Ascending aorta (tissue), 2 donors: ENCODE measurements at regions of chr3 and their contacts with region 1.

Region 1: GRCh38 chr3:58491506-58492402 is at the start of gene KCTD6:
- DNase-seq: peak; percentile 65 to 96
- H3K4me3 ChIP-seq: peak within 1 kb of the TSS; percentile 96 to 98
- H3K27ac ChIP-seq: peak within 1 kb of the TSS; percentile 81 to 92
- H3K4me1 ChIP-seq: peaks cover 5 to 37% of the 10 kb centered on the region in 2 donors
- H3K27me3 ChIP-seq: no peaks in the 10 kb centered on the region
- CTCF ChIP-seq: peak; percentile 58 to 86 (median 64)
- total RNA-seq, gene KCTD6: 6.6 TPM

Region 2: GRCh38 chr3:58332575-58333188 is 159.1 kb before region 1 on chr3 and contains the start of gene PXK:
- intact Hi-C with region 1: loop called (anchors 1 kb)
- DNase-seq: peak in 1 of 2 donors; percentile 89
- H3K4me3 ChIP-seq: peak within 1 kb of the TSS; percentile 88 to 93
- H3K27ac ChIP-seq: peak within 1 kb of the TSS; percentile 61 to 67
- H3K4me1 ChIP-seq: peaks cover 0 to 9% of the 10 kb centered on the region in 2 donors
- H3K27me3 ChIP-seq: no peaks in the 10 kb centered on the region
- CTCF ChIP-seq: peak in 2 of 3 experiments; percentile 9 to 43
- total RNA-seq, gene PXK: 14.8 TPM

Region 3: GRCh38 chr3:58433400-58434169 is 58.2 kb before region 1 on chr3 and contains the start of gene PDHB:
- intact Hi-C with region 1: loop called (anchors 1 kb)
- DNase-seq: peak; percentile 70 to 96
- H3K4me3 ChIP-seq: peak within 1 kb of the TSS; percentile 73 to 76
- H3K27ac ChIP-seq: peak within 1 kb of the TSS; percentile 84 to 89
- H3K4me1 ChIP-seq: peaks cover 0 to 16% of the 10 kb centered on the region in 2 donors
- H3K27me3 ChIP-seq: no peaks in the 10 kb centered on the region
- CTCF ChIP-seq: no peak
- total RNA-seq, gene PDHB: 30.7 TPM

Region 4: DNA sequence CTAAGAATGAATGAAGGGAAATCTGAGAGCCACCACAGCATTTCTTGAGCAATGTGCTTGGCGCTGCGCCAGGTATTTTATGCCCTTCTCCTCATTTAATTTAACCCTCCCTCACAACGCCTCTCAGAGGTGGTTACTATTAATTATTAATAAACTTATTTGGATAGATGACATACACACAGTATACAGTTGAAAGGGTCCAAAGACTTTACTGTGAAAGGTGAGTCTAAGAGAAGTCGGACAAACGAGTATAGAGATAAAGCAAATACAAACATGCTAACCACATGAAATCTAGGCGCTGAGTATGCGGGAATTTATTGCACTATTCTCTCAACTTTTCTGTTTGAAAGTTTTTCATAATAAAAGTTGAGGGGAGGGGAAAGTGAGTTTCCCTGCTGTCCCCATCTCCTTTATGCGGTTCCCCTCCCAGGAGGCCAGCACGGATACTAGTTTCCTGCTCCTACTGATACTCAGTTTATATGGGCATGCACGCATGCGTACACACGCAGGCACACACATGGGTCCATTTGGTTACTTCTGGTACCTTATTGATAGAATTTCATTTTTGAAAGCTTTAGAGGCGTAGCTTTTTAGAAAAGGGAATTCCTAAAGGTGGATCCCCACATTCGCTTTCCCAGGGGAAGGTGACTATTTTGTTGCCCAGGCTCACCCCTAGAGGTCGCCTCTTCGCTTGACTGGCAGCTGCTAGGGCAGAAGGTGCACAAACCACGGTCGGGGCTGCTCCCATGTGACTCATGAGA is 28.4 kb before region 1 on chr3:
- intact Hi-C with region 1: loop called (anchors 2 kb)
- DNase-seq: peak; percentile 25 to 86
- H3K4me3 ChIP-seq: peak overlapping the region in 1 of 2 donors; percentile 56
- H3K27ac ChIP-seq: no peak overlapping the region
- H3K4me1 ChIP-seq: peaks cover 0 to 2% of the 10 kb centered on the region in 2 donors
- H3K27me3 ChIP-seq: no peaks in the 10 kb centered on the region
- CTCF ChIP-seq: peak; percentile 62 to 82 (median 80)

Region 5: GRCh38 chr3:58532794-58533220 is 41.1 kb after region 1 on chr3:
- intact Hi-C with region 1: loop called (anchors 2 kb)
- DNase-seq: peak in 1 of 2 donors; percentile 85
- H3K4me3 ChIP-seq: no peak overlapping the region
- H3K27ac ChIP-seq: no peak overlapping the region
- H3K4me1 ChIP-seq: peaks cover 0 to 9% of the 10 kb centered on the region in 2 donors
- H3K27me3 ChIP-seq: no peaks in the 10 kb centered on the region
- CTCF ChIP-seq: peak; percentile 80 to 92 (median 86)